Aorta (tissue), 5 donors: ENCODE measurements at regions of chr10 and their contacts with region 1.

Region 1: DNA sequence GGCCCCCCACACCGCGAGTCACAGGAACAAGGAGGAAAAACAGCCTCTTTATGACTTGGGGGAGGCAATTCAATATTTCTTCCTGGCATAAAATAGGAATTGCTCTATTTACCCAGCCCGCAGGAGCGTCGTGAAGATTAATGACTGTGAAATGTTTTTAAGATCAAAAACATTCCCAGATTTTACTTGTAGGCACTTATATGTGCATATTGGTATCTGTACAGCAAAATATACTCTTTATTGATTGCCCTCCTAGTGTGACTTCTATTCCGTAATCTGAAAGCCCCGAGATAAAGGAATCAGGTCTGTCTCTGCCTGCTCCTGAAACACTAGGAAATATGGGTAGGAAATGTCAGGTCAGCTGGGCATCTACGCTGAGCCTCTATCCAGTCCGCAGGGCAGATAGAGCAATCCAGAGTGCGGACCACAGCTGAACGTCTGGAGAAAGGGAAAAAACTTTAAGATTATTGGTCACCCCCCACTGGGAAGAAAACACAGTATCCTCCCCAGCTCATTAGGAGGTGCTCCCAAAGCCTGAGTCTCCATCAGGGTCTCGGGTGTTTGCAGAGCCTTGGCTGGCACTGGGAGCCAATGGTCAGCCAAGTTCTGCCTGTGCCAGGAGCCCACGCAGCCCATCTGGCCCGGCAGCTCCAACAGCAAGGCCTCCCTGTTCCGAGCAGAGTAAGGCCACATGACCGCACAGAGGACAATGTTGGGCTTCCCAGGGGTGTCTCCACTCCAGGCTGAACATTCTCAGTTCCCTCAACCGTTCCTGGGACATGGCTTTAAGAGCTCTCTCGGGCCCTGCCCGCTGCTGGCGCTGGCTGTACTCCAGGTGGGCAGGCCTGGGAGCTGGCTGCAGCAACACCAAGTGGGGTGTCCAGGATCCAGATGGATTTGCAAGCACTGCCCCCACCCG is 7.7 kb downstream of the CTBP2 start:
- DNase-seq: peak; percentile 67 to 82
- ATAC-seq: peak; percentile 70
- H3K4me3 ChIP-seq: no peak overlapping the region
- H3K27ac ChIP-seq: peak overlapping the region; percentile 33 to 41
- H3K4me1 ChIP-seq: peaks cover 0 to 18% of the 10 kb centered on the region in 2 donors
- H3K27me3 ChIP-seq: no peaks in the 10 kb centered on the region

Region 2: GRCh38 chr10:123942114-123942807 is 1210.4 kb before region 1 on chr10:
- intact Hi-C with region 1: no loop called
- DNase-seq: no peak
- ATAC-seq: no peak
- H3K4me3 ChIP-seq: no peak overlapping the region
- H3K27ac ChIP-seq: no peak overlapping the region
- H3K4me1 ChIP-seq: no peaks in the 10 kb centered on the region
- H3K27me3 ChIP-seq: no peaks in the 10 kb centered on the region

Region 3: DNA sequence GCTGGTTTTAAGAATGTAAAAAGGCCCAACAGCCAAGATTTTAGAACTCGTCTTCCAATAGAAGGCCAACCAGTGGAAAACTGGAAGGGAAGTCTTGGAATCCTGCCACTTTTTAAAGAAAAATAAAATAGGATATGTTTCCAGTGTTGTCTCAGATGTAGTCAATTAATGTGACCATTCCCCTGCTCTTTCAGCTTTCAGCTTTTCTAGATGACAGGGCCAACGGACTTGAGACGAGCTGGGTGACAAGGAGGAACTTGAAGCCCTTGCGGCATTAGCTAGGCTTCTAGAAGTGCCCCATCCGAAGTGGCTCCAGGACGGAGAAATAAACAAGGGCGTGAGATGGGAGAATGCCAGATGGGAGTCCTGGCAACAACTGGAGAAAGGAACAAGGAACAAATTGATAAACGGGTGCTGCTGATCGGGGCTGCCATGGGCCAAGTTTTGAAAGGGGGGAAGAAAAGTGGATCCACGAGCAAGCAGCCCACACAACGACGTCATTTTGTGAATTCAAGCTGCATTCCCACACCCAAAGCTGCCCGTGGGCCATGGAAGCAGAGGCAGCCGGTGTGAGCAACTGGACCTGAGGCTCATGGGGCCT is 34.6 kb before region 1 on chr10:
- intact Hi-C with region 1: loop called (anchors 5 kb)
- DNase-seq: peak in 1 of 2 donors; percentile 50
- ATAC-seq: peak; percentile 2
- H3K4me3 ChIP-seq: no peak overlapping the region
- H3K27ac ChIP-seq: peak overlapping the region in 1 of 2 donors; percentile 39
- H3K4me1 ChIP-seq: peaks cover 7% of the 10 kb centered on the region in 2 donors
- H3K27me3 ChIP-seq: no peaks in the 10 kb centered on the region